Calu3 (cell line): ENCODE measurements at regions of chr5 and their contacts with region 1.

Region 1: DNA sequence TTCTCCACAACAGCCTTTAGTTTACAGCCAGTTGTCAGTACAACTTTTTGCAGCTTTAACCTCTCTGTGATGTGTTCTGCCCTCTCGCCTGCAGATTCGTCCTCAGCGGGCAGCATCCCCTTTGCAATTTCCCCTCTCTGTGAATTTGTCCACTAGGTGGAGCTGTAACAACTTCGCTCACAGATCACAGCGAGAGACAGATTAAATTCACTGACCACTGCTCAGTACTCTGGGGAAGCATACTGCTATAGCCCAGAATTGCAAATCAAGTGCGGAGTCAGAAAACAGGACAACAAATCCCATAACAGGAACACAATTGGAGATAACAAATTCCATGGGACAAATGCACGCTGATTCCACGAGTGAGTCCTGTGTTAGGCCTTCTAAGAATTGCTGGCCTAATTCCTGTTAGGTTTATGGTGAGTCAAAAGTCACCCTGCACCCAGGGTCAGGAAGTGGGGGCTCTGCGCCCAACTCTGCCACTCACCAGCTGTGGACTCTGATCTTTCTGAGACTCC is 2124.9 kb downstream of the MAT2B start:
- DNase-seq: peak; percentile 75
- H3K4me3 Mint-ChIP-seq: no peak overlapping the region
- H3K27ac Mint-ChIP-seq: no peak overlapping the region
- H3K4me1 Mint-ChIP-seq: peaks cover 11% of the 10 kb centered on the region
- H3K27me3 Mint-ChIP-seq: no peaks in the 10 kb centered on the region
- CTCF ChIP-seq: peak; percentile 42

Region 2: GRCh38 chr5:165881259-165881658 is 250.9 kb after region 1 on chr5:
- CTCF ChIA-PET with region 1: no interaction called
- intact Hi-C with region 1: loop called (anchors 2 kb)
- DNase-seq: peak; percentile 7
- H3K4me3 Mint-ChIP-seq: no peak overlapping the region
- H3K27ac Mint-ChIP-seq: no peak overlapping the region
- H3K4me1 Mint-ChIP-seq: no peaks in the 10 kb centered on the region
- H3K27me3 Mint-ChIP-seq: no peaks in the 10 kb centered on the region
- CTCF ChIP-seq: no peak

Region 3: GRCh38 chr5:167244583-167244982 is 1614.3 kb after region 1 on chr5:
- CTCF ChIA-PET with region 1: interaction called, 3 read pairs
- intact Hi-C with region 1: loop called (anchors 5 kb)
- DNase-seq: peak; percentile 41
- H3K4me3 Mint-ChIP-seq: no peak overlapping the region
- H3K27ac Mint-ChIP-seq: no peak overlapping the region
- H3K4me1 Mint-ChIP-seq: no peaks in the 10 kb centered on the region
- H3K27me3 Mint-ChIP-seq: no peaks in the 10 kb centered on the region
- CTCF ChIP-seq: no peak